ENCODE measurements at regions of chr15 and their contacts with region 1.

Region 1: DNA sequence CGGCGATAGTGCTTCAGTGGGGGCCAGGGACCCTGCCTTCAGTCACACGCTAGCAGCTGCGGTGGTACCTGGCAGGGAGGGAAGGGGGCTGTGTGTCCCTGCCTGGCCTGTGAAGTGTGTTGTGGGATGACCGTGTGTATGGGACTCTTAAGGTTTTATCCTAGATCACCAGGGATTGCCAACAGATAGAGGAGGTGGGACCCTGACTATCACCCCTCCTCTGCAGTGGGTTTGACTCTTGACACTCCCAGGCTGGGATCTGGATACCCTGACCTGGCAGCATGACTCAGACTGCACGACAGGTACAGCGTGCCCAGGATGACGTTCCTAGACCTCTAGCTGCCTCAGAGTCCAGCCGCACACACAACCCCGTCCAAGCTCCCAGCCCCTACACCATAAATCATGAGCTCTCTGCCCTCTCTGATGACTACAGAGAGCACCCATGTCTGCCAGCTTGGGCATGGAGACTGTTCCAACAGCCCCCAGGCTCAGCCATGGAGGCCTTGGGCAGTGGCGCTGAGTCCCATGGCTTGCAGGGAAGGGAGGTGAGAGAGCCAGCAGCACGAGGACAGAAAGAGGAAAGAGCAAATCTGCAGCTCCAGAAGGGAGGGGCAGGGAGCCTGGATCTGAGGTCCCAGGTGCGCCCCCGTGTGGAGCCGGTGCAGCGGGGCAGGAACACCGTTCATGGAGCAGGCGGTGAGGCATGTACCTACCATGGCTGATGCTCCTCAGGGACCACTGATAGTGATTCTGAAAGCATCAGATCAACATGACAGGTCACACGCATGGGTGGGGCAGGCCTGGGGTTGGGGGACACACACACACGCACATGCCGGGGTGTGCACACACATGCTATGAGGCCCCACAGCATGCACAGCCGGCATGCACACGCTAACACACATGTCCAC is 71.0 kb downstream of the ADAMTS7 start:
- DNase-seq: peak; percentile 95
- ATAC-seq: peak; percentile 68
- H3K4me3 Mint-ChIP-seq: no peak overlapping the region
- H3K27ac Mint-ChIP-seq: no peak overlapping the region
- H3K4me1 Mint-ChIP-seq: peaks cover 22% of the 10 kb centered on the region
- H3K27me3 Mint-ChIP-seq: no peaks in the 10 kb centered on the region; the same call in 1 of the 2 replicates
- CTCF ChIP-seq: peak; percentile 71

Region 2: DNA sequence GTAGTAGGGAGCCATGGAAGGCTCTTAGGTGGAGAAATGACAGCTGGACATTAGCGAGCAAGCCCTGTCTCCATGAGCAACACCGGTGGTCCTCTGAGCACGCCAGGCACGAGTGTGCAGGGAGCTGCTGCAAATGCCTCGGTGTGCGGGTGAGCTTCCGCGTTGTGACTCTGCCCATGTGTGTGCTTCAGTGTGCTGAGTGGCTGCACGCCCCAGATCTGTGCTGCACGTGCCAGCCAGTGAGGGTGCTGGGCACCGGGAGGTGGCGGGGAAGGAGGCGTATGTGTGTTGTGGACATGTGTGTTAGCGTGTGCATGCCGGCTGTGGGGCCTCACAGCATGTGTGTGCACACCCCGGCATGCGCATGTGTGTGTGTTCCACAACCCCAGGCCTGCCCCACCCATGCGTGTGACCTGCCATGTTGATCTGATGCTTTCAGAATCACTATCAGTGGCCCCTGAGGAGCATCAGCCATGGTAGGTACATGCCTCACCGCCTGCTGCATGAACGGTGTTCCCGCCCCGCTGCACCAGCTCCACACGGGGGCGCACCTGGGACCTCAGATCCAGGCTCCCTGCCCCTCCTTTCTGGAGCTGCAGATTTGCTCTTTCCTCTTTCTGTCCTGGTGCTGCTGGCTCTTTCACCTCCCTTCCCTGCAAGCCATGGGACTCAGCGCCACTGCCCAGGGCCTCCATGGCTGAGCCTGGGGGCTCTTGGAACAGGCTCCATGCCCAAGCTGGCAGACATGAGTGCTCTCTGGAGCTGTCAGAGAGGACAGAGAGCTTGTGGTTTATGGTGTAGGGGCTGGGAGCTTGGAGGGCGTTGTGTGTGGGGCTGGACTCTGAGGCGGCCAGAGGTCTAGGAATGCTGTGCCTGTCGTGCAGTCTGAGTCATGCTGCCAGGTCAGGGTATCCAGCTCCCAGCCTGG is 832.2 kb before region 1 on chr15:
- CTCF ChIA-PET with region 1: interaction called, 33 read pairs
- POLR2A ChIA-PET with region 1: no interaction called
- DNase-seq: peak; percentile 85
- ATAC-seq: peak; percentile 88
- H3K4me3 Mint-ChIP-seq: no peak overlapping the region
- H3K27ac Mint-ChIP-seq: no peak overlapping the region
- H3K4me1 Mint-ChIP-seq: peaks cover 17% of the 10 kb centered on the region
- H3K27me3 Mint-ChIP-seq: peaks cover 3% of the 10 kb centered on the region; the same call in 1 of the 2 replicates
- CTCF ChIP-seq: 0 out of 2 replicates have a peak, but pooled peaks have one; percentile 36

Region 3: DNA sequence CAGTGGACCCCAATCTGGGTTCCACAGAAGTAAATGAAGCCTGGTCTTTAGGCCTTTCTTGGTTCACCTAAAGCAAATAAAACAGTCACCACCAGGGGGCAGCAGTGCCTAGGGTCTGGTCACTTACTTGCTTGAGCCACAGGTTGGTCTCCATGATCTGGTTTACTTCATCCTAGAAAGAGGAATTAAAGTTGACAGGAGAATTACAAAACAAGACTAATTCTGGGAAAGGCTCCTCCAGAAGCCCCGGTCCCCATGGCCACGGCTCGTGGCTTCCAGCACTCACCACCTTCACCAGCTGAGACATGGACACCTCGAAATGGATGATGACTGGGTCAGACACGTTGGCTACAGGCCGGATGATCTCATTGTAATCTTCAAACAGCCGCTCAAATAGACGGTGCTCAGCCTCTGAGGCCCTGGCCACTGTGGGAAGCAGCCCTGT is 121.7 kb before region 1 on chr15:
- CTCF ChIA-PET with region 1: interaction called, 51 read pairs
- POLR2A ChIA-PET with region 1: no interaction called
- DNase-seq: peak; percentile 94
- ATAC-seq: peak; percentile 24
- H3K4me3 Mint-ChIP-seq: peak overlapping the region; percentile 33
- H3K27ac Mint-ChIP-seq: no peak overlapping the region
- H3K4me1 Mint-ChIP-seq: peaks cover 23% of the 10 kb centered on the region
- H3K27me3 Mint-ChIP-seq: peaks cover 48% of the 10 kb centered on the region
- CTCF ChIP-seq: peak; percentile 66

Region 4: DNA sequence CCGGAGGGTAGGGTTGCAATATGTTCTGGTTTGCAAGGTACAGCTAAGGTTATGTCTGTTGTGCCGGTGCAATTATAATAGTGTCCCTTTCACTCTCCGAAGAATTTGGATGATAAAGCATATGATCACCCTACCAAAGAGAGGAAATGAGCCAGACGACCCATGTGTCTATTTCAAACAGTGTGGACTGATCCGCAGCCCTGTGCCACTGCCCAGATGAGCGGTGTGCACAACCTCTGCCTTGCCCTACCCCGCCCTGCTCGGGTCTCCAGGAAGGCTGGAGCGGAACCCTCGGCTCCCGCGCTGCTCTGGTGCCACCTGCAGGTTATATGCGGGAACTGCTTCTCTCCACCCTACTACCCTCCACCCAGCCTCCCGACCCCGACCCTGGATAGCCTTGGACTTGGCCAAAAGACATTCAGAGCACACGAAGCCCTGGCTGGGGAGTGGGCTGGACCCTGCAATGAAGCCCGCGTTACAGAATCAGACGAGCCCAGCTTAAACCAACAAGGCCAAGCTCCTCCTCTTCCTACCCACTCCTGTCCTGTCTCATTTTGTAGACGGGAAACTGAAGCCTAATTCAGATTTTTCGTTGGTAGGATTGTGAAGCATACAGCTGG is 30.9 kb before region 1 on chr15:
- CTCF ChIA-PET with region 1: interaction called, 19 read pairs
- POLR2A ChIA-PET with region 1: no interaction called
- DNase-seq: peak; percentile 90
- ATAC-seq: peak; percentile 100
- H3K4me3 Mint-ChIP-seq: no peak overlapping the region
- H3K27ac Mint-ChIP-seq: no peak overlapping the region
- H3K4me1 Mint-ChIP-seq: peaks cover 9% of the 10 kb centered on the region
- H3K27me3 Mint-ChIP-seq: peaks cover 19% of the 10 kb centered on the region
- CTCF ChIP-seq: peak; percentile 91

Region 5: DNA sequence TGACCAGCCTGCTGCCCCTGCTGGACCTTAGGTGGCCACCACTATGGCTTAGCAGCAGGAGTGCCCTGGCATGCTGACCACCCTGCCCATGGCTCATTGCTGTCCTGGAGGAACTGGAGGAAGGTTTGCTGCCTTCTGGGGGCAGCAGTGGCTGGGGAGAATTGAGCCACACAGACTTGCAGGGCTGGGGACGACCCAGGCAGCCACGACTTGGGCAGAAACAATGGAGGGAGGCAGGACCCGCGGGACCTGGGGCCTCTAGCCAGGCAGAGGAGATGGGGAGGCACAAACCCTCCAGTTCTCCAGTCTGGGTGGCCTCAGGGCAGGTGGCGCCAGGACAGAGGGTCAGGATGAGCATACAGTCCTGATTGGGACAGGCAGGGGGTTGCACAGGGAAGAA is 38.2 kb after region 1 on chr15:
- CTCF ChIA-PET with region 1: no interaction called
- POLR2A ChIA-PET with region 1: no interaction called
- DNase-seq: no peak
- ATAC-seq: no peak
- H3K4me3 Mint-ChIP-seq: no peak overlapping the region
- H3K27ac Mint-ChIP-seq: peak overlapping the region; percentile 34; the same call in 1 of the 2 replicates
- H3K4me1 Mint-ChIP-seq: no peaks in the 10 kb centered on the region
- H3K27me3 Mint-ChIP-seq: no peaks in the 10 kb centered on the region
- CTCF ChIP-seq: no peak

Region 6: GRCh38 chr15:78811124-78811824 is 71.0 kb after region 1 on chr15 and contains the start of gene ADAMTS7:
- CTCF ChIA-PET with region 1: interaction called, 19 read pairs
- POLR2A ChIA-PET with region 1: no interaction called
- DNase-seq: peak; percentile 88
- ATAC-seq: peak; percentile 85
- H3K4me3 Mint-ChIP-seq: peak within 1 kb of the TSS; percentile 78
- H3K27ac Mint-ChIP-seq: 0 out of 2 replicates have a peak within 1 kb of the TSS, but pooled peaks have one; percentile 2
- H3K4me1 Mint-ChIP-seq: peaks cover 30% of the 10 kb centered on the region
- H3K27me3 Mint-ChIP-seq: peaks cover 14% of the 10 kb centered on the region
- CTCF ChIP-seq: peak; percentile 82
- total RNA-seq, gene ADAMTS7: 66.5 to 70.3 TPM (median 67.1 TPM) in 3 replicates

Region 7: DNA sequence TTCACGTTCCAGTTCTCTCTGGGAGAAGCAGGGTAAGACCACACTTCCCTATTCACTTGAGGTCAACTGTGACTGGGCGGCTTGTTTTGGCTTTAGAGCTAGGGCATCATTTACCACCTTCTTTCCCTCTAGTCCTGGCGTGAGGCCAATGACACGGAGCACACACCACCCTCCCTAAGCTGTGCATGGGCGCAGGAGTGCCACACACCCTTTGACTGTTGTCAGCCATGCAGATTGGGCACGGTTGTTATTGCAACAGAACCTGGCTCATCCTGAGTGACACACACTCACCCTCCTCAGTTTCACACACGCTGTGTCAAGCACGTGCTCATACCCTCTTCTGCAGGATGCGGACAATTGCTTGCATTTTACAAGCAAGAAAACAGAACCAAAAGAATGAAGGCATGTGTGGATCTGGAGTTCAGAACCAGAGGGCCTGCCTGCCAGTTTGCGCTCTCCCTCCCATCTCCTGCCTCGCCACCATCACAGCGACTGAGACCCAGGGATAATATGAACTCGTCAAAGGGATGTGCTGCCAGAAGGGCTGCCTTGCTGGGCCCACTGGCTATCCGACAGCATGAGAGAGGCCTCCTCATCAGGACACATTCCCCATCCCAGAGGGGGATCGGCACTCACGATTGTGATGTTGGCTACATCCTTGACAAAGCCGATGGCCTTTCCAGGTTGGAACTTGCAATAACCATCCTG is 187.0 kb after region 1 on chr15:
- CTCF ChIA-PET with region 1: no interaction called
- POLR2A ChIA-PET with region 1: no interaction called
- DNase-seq: no peak
- ATAC-seq: no peak
- H3K4me3 Mint-ChIP-seq: no peak overlapping the region
- H3K27ac Mint-ChIP-seq: no peak overlapping the region
- H3K4me1 Mint-ChIP-seq: peaks cover 2% of the 10 kb centered on the region; the same call in 1 of the 2 replicates
- H3K27me3 Mint-ChIP-seq: no peaks in the 10 kb centered on the region
- CTCF ChIP-seq: no peak